Endothelial cell of umbilical vein (primary cell): ENCODE measurements at regions of chr3 and their contacts with region 1.

Region 1: GRCh38 chr3:46935168-46935858 is 41.2 kb downstream of the CCDC12 start:
- DNase-seq: peak; percentile 98
- H3K4me3 ChIP-seq: no peak overlapping the region
- H3K27ac ChIP-seq: peak overlapping the region; percentile 87
- H3K4me1 ChIP-seq: peaks cover 62% of the 10 kb centered on the region
- H3K27me3 ChIP-seq: no peaks in the 10 kb centered on the region
- CTCF ChIP-seq: peak; percentile 50 to 72
- POLR2A ChIP-seq: peak; percentile 60

Region 2: GRCh38 chr3:46960081-46960701 is 24.9 kb after region 1 on chr3:
- CTCF ChIA-PET with region 1: interaction called, 25 read pairs
- POLR2A ChIA-PET with region 1: no interaction called
- dilution Hi-C with region 1: no loop called
- intact Hi-C with region 1: loop called (anchors 1 kb)
- DNase-seq: peak; percentile 92
- H3K4me3 ChIP-seq: peak overlapping the region in 2 of 3 experiments; percentile 0 to 40
- H3K27ac ChIP-seq: peak overlapping the region; percentile 82
- H3K4me1 ChIP-seq: peaks cover 33% of the 10 kb centered on the region
- H3K27me3 ChIP-seq: no peaks in the 10 kb centered on the region
- CTCF ChIP-seq: no peak
- POLR2A ChIP-seq: no peak

Region 3: DNA sequence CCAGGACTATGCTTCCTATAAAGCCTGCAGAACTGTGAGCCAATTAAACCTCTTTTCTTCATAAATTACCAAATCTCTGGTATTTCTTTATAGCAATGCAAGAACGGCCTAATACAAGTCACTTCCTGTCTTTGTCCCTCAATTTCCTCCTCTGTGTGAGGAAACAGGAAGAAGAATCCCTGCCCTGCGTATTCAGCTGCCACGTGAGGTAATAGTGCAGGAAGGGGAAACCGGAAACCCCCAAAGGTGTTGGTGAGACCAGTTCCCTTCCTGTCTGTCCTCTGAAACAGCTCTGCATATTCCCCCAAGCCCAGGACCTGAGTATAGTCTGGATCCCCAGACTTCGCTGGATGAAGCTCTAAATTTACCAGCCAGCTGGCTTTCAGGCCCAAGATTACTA is 427.4 kb after region 1 on chr3:
- CTCF ChIA-PET with region 1: no interaction called
- POLR2A ChIA-PET with region 1: no interaction called
- dilution Hi-C with region 1: no loop called
- intact Hi-C with region 1: no loop called
- DNase-seq: peak; percentile 46
- H3K4me3 ChIP-seq: no peak overlapping the region
- H3K27ac ChIP-seq: peak overlapping the region; percentile 66
- H3K4me1 ChIP-seq: peaks cover 17% of the 10 kb centered on the region
- H3K27me3 ChIP-seq: no peaks in the 10 kb centered on the region
- CTCF ChIP-seq: no peak
- POLR2A ChIP-seq: no peak